ENCODE measurements at regions of chr3 and their contacts with region 1.

Region 1: GRCh38 chr3:52220380-52221026 is 4.9 kb downstream of the TLR9 start:
- DNase-seq: no peak
- H3K4me3 ChIP-seq: no peak overlapping the region
- CTCF ChIP-seq: peak; percentile 98

Region 2: DNA sequence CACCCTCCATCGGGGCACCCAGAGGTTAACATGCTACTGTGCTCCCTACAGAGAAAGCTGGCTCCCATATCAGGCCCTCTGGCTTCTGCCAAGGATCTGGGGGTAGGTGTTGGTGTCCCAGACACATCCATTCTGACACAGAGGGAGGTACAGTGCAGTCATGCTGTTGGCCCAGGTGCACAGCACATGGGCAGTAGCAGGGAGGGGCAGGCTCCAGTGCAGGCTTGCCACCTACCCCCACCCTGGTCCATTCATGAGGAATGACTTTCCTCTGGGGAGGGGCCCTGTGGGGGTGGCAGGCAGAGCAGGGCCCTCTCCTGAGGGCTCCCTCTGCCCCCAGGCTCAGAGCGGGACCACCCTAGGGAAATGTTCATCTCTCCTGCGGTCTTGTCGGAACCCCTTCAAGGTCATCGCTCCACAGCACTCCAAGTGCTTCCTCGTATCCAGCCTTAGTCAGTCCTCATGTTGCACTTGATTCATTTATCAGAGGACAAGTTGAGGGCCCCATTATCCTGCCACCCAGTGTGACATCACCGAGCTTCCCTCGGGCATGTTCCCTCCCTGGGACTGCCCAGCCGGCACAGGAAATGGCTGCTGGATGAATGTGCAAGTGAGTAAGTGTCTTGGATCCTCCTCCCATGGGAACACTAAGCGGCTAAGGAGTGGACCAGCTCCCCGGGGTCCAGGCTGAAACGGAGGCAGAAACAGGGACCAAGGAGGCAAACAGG is 174.2 kb before region 1 on chr3:
- CTCF ChIA-PET with region 1: no interaction called
- POLR2A ChIA-PET with region 1: no interaction called
- DNase-seq: peak; percentile 98
- H3K4me3 ChIP-seq: peak overlapping the region; percentile 32; the same call in 1 of the 2 replicates
- CTCF ChIP-seq: no peak

Region 3: GRCh38 chr3:52076896-52077780 is 143.4 kb before region 1 on chr3:
- CTCF ChIA-PET with region 1: no interaction called
- POLR2A ChIA-PET with region 1: interaction called, 13 read pairs
- DNase-seq: no peak
- H3K4me3 ChIP-seq: no peak overlapping the region
- CTCF ChIP-seq: no peak

Region 4: DNA sequence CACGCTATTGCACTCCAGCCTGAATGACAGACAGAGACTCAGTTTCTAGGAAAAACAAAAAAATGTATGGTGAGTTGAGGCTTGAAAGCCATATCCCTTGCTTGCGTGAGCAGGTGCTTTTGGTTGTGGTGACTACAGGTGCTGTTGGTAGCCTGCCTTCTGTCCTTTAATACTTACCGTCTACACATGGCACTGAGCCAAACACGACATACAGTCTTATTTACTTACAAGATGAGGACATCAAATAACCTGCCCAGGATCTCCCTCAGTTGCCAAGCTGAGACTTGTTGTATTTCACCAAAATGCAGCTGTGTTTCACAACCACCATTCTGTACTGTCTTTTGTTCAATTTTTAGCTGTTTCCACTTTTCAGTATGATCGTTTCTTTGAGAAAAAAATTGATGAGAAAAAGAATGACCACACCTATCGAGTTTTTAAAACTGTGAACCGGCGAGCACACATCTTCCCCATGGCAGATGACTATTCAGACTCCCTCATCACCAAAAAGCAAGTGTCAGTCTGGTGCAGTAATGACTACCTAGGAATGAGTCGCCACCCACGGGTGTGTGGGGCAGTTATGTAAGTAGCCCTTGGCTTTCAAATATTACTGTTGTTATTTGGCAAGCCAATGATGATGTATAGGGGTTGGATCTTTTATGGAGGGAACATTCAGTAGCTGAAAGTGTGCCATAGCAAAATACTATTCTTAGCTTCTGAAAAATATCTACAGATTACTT is 16.0 kb before region 1 on chr3:
- CTCF ChIA-PET with region 1: interaction called, 219 read pairs
- POLR2A ChIA-PET with region 1: interaction called, 3 read pairs
- DNase-seq: no peak
- H3K4me3 ChIP-seq: no peak overlapping the region
- CTCF ChIP-seq: no peak

Region 5: DNA sequence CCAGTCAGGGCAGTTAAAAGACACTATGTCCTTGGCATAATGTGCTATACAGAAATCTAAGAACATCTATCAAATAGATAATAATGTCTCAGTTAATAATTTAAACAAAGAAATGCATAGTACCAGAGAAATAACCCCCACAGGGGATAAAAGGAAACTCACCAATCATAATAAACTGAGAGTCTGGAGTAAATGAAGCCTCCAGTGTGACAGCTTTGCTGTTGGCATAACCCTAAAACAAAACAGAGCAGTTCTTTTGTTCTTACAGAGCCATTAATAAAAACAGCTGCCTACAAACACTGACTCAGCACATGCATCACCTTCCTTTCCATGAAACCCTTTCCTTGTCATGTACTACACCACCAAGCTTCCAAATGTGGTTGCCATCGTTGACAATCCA is 38.5 kb after region 1 on chr3:
- CTCF ChIA-PET with region 1: interaction called, 15 read pairs
- POLR2A ChIA-PET with region 1: no interaction called
- DNase-seq: no peak
- H3K4me3 ChIP-seq: no peak overlapping the region
- CTCF ChIP-seq: no peak

Region 6: GRCh38 chr3:52350416-52350815 is 129.9 kb after region 1 on chr3:
- CTCF ChIA-PET with region 1: interaction called, 389 read pairs
- POLR2A ChIA-PET with region 1: no interaction called
- DNase-seq: no peak
- H3K4me3 ChIP-seq: no peak overlapping the region
- CTCF ChIP-seq: no peak

Region 7: DNA sequence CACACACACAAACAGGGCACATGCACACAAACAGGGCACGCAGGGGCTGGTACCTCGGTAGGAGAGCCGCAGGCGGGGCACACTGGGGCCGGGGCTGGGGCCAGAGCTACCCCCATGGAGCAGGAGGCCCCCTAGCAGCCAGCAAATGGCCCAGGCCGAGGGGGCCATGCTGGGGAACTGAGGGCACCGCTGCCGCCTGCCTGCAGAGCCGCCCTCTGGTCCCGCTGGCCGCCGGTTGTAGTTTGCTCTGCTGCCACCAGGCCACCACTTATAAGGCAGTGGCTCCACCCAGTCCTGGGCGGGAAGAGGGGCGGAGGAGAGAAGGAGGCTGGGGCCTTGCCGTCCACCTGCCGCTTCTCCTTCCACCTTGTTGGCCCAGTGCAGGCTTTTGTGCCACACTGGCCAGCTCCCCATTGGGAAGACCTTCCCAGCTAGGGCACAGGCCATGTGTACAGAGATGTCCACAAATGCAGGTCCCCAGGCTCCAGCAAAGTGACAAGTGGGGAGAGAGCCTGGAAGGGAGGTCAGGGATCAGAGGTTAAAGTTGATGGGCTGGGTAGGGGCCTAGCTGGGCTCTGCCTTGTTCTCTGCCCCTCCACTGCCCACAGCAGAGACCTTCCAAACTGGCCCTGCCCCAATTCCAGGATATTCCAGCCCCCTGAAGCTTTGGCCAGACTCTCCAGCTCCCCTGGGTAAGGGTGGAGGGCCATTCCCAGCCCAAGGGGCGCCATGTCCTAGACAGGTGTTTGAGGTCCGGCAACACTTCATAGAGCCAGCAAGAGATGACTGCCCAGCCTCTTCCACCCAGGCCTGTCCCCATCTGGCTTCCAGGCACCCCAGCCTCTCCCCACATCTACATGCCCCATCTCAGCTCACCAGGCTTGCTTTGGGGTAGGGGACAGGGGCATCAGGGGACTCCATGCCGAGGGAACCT is 224.6 kb after region 1 on chr3 and contains the start of gene SEMA3G:
- CTCF ChIA-PET with region 1: interaction called, 31 read pairs
- POLR2A ChIA-PET with region 1: no interaction called
- DNase-seq: no peak
- H3K4me3 ChIP-seq: no peak within 1 kb of the TSS
- CTCF ChIP-seq: peak; percentile 76